Right ventricle myocardium superior (tissue), 1 donor: ENCODE measurements at regions of chr18 and their contacts with region 1.

Region 1: DNA sequence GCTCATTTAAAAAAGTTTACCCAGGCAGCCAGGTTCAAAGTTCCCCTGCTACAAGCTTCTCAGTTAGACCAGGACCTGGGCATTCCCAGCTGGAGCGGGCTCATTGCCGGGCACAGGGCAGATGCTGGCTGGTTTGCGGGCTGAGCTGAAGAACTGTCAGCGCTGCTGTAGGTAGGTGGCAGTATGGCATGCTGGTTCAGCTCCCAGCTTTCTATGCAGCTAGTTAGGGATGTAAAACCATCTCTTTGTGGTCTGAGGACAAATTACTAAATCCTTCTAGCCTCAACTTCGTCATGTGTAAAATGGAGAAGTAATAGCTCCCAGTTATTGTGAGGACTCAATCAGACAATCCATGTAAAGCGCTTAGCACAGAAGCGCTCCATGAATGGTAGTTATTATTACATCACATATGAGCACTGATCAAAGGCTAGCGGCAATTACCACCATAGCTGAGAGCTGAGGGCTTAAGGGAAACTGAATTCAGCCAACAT is 2.4 kb upstream of the LDLRAD4 start:
- DNase-seq: peak; percentile 83
- ATAC-seq: peak; percentile 72

Region 2: DNA sequence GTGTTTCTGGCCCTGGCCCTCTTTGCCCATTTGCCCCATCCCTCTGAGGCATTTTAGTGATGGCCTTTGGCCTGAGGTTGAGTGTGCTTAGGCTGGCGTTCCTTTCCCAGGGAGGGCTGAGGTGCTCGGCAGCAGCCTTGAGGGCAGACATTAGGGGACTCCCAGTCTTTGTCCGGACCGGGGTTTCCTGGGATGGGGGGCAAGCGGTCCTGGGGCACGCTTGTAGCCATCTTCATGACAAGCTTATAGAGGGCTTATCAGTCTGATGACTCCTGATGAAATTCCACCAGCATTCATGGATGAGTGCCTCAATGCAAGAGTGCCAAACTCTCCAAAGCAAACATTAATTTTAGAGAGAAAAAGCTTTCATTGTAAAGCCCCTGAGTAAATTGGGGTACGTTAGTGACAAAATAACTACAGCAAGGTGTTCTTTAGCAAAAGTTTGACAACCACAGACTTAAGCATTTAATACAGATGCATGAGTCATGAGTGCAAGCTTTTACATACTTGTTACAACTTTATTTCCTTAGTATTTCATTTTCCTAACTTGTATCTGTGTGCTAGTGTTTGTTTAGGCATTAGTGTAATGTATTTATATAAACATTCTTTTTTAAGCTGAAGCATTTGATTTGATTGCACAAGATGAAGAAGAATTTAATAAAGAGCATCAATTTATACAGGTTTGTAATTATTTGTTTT is 179.4 kb before region 1 on chr18:
- intact Hi-C with region 1: no loop called
- DNase-seq: no peak
- ATAC-seq: no peak

Region 3: GRCh38 chr18:13375302-13376255 is 159.4 kb after region 1 on chr18:
- intact Hi-C with region 1: loop called (anchors 5 kb)
- DNase-seq: peak; percentile 78
- ATAC-seq: peak; percentile 58

Region 4: GRCh38 chr18:13530879-13531387 is 314.8 kb after region 1 on chr18:
- intact Hi-C with region 1: loop called (anchors 5 kb)
- DNase-seq: peak; percentile 83
- ATAC-seq: peak; percentile 92

Region 5: DNA sequence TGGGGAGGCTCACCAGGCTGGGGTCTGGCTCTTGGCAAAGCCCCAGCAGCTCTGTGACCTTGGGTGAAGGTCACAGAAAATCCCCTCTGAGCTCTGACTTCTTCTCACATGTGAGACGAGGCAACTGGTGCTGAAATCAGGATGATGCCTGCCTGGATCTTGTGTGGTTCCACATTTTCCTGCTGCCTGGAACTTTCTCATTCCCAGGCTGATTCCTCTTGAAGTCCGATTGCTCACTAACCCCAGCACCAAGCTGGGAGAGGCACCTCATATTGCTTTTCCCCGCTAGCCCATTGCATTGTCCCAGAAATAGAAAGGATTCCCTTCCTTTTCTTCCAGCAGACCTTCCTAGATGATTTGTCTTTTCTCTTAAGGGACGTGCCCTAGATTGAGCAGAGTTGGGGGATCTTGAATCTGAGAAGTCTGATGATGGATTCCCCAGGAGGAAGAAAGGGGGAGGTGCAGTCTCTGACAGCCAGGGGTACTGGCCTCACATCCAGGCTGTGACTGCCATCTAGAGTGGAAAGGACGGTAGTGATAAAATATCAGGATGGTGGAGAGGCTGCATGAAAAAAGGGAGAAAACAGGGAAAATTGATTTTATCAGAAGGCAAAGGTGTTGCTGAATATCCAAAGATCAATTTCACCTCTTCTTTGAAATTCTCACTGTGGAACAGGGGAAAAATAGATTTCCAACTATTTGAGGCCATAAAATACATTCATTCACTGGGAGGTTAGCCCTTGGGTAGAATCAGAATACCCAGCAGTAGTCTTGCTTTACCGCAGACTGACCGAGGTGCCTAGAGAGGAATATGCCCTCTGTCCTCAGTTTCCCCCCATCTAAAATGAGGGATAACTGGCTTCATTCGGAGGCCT is 413.9 kb after region 1 on chr18:
- intact Hi-C with region 1: loop called (anchors 5 kb)
- DNase-seq: no peak
- ATAC-seq: peak; percentile 90

Region 6: GRCh38 chr18:13641551-13642439 is 425.7 kb after region 1 on chr18:
- intact Hi-C with region 1: no loop called
- DNase-seq: peak; percentile 70
- ATAC-seq: peak; percentile 67